ENCODE measurements at regions of chr5 and their contacts with region 1.

Region 1: GRCh38 chr5:111530298-111530740 is 18.0 kb upstream of the STARD4 start:
- DNase-seq: peak; percentile 43
- CTCF ChIP-seq: no peak

Region 2: GRCh38 chr5:111517853-111518501 is 12.3 kb before region 1 on chr5:
- CTCF ChIA-PET with region 1: interaction called, 27 read pairs
- POLR2A ChIA-PET with region 1: no interaction called
- DNase-seq: no peak
- CTCF ChIP-seq: no peak

Region 3: GRCh38 chr5:111550279-111551020 is 20.1 kb after region 1 on chr5:
- CTCF ChIA-PET with region 1: interaction called, 14 read pairs
- POLR2A ChIA-PET with region 1: no interaction called
- DNase-seq: peak; percentile 60
- CTCF ChIP-seq: peak; percentile 60

Region 4: GRCh38 chr5:112146323-112147226 is 616.3 kb after region 1 on chr5:
- CTCF ChIA-PET with region 1: interaction called, 17 read pairs
- POLR2A ChIA-PET with region 1: no interaction called
- DNase-seq: peak; percentile 49
- CTCF ChIP-seq: peak; percentile 50

Measured in GM10248 (cell line).